ENCODE measurements at regions of chr9 and their contacts with region 1.

Region 1: DNA sequence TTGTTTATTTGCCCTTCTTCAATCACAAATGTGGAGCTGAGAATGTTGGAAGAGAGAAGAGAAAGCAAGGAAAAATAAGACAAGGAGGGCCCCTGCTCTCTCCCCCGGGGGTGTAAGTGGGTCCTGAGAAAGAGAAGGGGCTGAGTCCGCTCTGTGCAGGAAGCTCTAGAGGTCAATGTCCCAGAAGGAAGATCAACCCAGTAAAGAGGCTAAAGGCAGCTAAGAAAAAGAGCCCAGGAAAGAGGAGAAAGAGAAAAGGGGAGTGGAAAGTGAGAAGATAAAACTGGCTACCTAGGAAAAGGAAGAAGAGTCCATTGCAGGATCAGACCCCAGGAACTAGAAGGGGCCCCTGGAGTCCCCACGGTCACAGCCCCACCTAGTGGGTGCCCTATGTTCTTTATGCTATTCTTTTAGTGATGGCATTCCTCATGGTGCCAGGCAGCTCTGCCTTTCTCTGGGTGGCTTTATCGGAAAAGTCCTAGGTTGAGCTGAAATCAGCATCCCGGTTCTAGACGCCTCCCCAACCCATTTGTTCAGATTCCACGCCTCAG is 583.4 kb downstream of the ACTL7B start:
- DNase-seq: peak; percentile 39
- ATAC-seq: peak; percentile 82
- H3K4me3 ChIP-seq: peak overlapping the region; percentile 24; the same call in 1 of the 2 replicates
- H3K27ac ChIP-seq: peak overlapping the region; percentile 88; the same call in 1 of the 2 replicates
- H3K4me1 ChIP-seq: peaks cover 7% of the 10 kb centered on the region; the same call in 1 of the 2 replicates
- H3K27me3 ChIP-seq: no peaks in the 10 kb centered on the region
- CTCF ChIP-seq: peak; percentile 58
- POLR2A ChIP-seq: no peak
- RAD21 ChIP-seq: peak; percentile 70

Region 2: DNA sequence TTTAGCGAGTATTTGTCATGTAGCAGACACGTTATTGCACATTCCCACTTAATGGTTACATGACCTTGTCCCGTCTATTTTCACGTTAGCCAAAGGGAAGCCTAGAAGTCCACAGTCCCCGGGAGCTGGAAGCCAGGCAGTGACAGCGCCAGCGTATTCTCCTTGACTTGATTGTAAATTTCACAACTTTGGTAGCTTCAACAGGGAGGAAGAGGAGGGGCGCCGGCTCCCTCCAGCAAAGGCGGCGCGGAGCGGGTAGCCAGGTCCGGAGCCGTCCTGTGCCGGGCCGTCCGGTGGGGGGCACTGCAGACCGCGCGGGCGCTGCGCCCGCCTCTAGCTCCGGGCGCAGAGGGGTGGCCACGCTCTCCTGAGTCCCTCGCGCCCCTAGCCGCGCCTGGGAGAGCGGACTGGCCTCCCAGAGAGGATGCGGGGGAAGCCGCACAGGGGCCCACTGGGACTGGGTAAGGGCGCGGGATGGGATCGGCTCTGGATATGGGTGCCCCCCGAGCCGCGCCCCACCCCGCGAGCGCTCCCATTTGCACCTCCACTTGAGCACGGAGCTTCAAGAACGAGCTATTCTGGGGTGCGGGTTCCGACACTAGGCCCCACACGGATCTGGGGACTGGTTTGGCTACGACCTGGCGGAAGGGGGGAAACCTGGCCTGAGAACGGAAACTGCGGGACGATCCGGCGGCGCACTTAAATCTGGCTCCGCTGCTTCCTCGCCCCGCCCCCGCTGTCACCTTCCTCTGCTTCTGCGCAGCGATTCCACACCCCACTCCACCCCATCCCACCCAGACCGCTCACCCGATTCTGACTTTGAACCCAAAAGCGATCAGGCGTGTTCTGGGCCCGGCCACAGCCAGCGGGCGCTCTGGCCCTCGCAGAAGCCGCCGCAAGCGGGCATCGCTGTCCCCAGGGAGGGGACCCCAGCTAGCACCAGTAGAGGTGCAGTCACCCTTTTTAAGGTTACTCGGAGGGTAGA is 806.7 kb before region 1 on chr9:
- CTCF ChIA-PET with region 1: interaction called, 6 read pairs
- POLR2A ChIA-PET with region 1: no interaction called
- dilution Hi-C with region 1: no loop called
- in situ Hi-C with region 1: no loop called
- intact Hi-C with region 1: loop called (anchors 1 kb)
- DNase-seq: peak; percentile 33
- ATAC-seq: peak; percentile 99
- H3K4me3 ChIP-seq: peak overlapping the region; percentile 48
- H3K27ac ChIP-seq: no peak overlapping the region
- H3K4me1 ChIP-seq: no peaks in the 10 kb centered on the region
- H3K27me3 ChIP-seq: peaks cover 4% of the 10 kb centered on the region
- CTCF ChIP-seq: peak; percentile 83
- POLR2A ChIP-seq: no peak
- RAD21 ChIP-seq: peak; percentile 85

Region 3: GRCh38 chr9:107478805-107479204 is 793.6 kb before region 1 on chr9:
- CTCF ChIA-PET with region 1: interaction called, 4 read pairs
- POLR2A ChIA-PET with region 1: no interaction called
- dilution Hi-C with region 1: no loop called
- in situ Hi-C with region 1: loop called (anchors 5 kb)
- intact Hi-C with region 1: loop called (anchors 1 kb)
- DNase-seq: no peak
- ATAC-seq: no peak
- H3K4me3 ChIP-seq: no peak overlapping the region
- H3K27ac ChIP-seq: no peak overlapping the region
- H3K4me1 ChIP-seq: peaks cover 2% of the 10 kb centered on the region
- H3K27me3 ChIP-seq: no peaks in the 10 kb centered on the region
- CTCF ChIP-seq: no peak
- POLR2A ChIP-seq: no peak
- RAD21 ChIP-seq: no peak

Region 4: GRCh38 chr9:107484117-107484723 is 788.2 kb before region 1 on chr9:
- CTCF ChIA-PET with region 1: interaction called, 4 read pairs
- POLR2A ChIA-PET with region 1: no interaction called
- dilution Hi-C with region 1: no loop called
- in situ Hi-C with region 1: loop called (anchors 5 kb)
- intact Hi-C with region 1: loop called (anchors 1 kb)
- DNase-seq: peak; percentile 81
- ATAC-seq: peak; percentile 74
- H3K4me3 ChIP-seq: no peak overlapping the region
- H3K27ac ChIP-seq: no peak overlapping the region
- H3K4me1 ChIP-seq: peaks cover 2% of the 10 kb centered on the region
- H3K27me3 ChIP-seq: no peaks in the 10 kb centered on the region
- CTCF ChIP-seq: peak; percentile 66
- POLR2A ChIP-seq: peak; percentile 82
- RAD21 ChIP-seq: peak; percentile 78

Region 5: GRCh38 chr9:107749787-107750444 is 522.5 kb before region 1 on chr9:
- CTCF ChIA-PET with region 1: interaction called, 4 read pairs
- POLR2A ChIA-PET with region 1: no interaction called
- dilution Hi-C with region 1: no loop called
- in situ Hi-C with region 1: no loop called
- intact Hi-C with region 1: loop called (anchors 1 kb)
- DNase-seq: peak; percentile 96
- ATAC-seq: peak; percentile 78
- H3K4me3 ChIP-seq: no peak overlapping the region
- H3K27ac ChIP-seq: peak overlapping the region; percentile 81
- H3K4me1 ChIP-seq: peaks cover 19% of the 10 kb centered on the region
- H3K27me3 ChIP-seq: no peaks in the 10 kb centered on the region
- CTCF ChIP-seq: no peak
- POLR2A ChIP-seq: no peak
- RAD21 ChIP-seq: no peak

Measured in IMR-90 (cell line).